Activated naive CD4-positive, alpha-beta T cell treated with anti-CD3 and anti-CD28 coated beads for 36 hours (primary cell): ENCODE measurements at regions of chrX and their contacts with region 1.

Region 1: DNA sequence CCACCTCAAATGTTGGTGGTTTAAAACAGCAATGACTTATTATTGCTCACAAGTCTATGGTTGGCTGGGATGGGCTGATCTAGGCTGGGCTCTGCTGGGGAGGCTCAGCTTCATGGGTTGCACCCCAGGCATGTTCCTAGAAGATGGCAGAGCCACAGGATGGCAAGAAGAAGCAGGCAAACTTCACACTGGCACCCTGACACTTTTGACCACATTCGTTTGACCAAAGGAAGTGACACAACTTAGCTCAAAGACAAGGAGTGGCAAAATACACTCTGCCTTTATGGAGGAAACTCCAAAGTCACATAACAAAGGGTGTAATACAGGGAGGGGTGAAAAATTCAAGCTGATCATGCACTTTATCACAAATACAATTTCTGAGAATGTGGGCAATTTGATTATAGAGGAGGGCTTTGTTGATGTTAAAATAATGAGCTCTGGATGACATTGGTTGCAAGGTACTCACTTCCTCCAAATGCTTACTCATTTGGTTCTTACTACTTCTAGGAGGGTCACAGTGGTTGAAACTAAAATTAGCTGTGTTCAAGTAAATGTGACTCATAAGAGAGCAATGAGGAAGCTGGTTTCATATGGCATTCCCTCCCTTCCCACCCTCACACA is 249.2 kb upstream of the RPS6KA3 start:
- DNase-seq: peak; percentile 15
- H3K4me3 Mint-ChIP-seq: no peak overlapping the region
- H3K27ac Mint-ChIP-seq: no peak overlapping the region
- H3K4me1 Mint-ChIP-seq: peaks cover 22% of the 10 kb centered on the region
- H3K27me3 Mint-ChIP-seq: peaks cover 16% of the 10 kb centered on the region

Region 2: DNA sequence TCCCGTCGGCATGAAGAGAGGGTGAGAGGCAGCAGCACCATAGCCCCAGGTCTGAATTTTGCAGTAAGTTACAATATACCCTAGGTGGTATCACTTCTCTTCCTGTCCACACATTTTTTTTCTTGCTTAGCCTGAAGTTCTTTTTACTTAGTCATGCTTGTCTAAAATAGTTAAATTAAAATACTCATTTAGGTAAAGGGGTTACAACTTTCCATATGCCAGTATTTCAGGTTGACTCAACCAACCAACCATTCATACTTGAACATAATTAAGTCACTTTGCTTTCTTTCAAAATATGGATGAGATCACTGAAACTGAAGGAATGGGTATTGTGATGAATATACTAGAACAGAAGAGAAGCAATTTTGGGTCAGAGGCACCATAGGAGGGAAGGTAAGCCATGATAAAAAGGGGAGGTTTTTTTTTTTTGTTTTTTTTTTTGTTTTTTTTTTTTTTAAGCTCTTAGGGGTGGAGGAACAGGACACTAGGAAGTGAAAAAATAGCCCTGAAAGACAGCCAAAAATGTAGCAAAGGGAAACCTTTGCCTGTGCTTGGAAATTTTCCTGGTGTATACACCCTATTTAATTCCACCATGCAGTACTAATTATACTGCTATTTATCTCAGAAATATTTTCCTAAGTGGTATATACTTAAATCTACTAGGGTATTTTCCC is 291.0 kb before region 1 on chrX:
- CTCF ChIA-PET with region 1: no interaction called
- intact Hi-C with region 1: loop called (anchors 1 kb)
- DNase-seq: no peak
- H3K4me3 Mint-ChIP-seq: no peak overlapping the region
- H3K27ac Mint-ChIP-seq: no peak overlapping the region
- H3K4me1 Mint-ChIP-seq: peaks cover 37% of the 10 kb centered on the region
- H3K27me3 Mint-ChIP-seq: no peaks in the 10 kb centered on the region

Region 3: DNA sequence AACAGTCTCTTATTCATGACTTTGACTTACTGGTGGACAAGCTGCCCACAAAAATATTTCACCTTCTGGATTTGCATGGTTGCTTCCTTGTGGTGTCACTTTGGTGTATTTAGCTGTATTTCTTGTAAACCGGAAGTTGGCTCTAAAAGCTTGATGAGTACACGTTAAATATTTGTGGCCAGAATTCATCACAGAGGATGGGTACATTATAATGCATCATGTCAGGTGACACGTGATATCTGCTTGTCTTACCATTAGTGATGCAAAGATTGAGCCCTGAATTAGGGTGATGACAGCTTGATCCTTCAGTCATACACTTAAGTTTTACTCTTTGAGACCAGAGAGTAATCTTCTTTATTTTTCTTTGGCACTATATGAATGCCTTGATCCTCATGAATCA is 61.0 kb before region 1 on chrX:
- CTCF ChIA-PET with region 1: interaction called, 3 read pairs
- intact Hi-C with region 1: loop called (anchors 5 kb)
- DNase-seq: no peak
- H3K4me3 Mint-ChIP-seq: no peak overlapping the region
- H3K27ac Mint-ChIP-seq: no peak overlapping the region
- H3K4me1 Mint-ChIP-seq: peaks cover 33% of the 10 kb centered on the region
- H3K27me3 Mint-ChIP-seq: no peaks in the 10 kb centered on the region